Dendritic cell treated with granulocyte-macrophage colony-stimulating factor and Interleukin-4, amounts not matched to agents 40 ng/mL and 50 ng/mL, for 4 days (primary cell): ENCODE measurements at regions of chr19 and their contacts with region 1.

Region 1: GRCh38 chr19:1173845-1174809 is at the start of gene SBNO2:
- H3K4me3 Mint-ChIP-seq: peak within 1 kb of the TSS; percentile 98
- H3K27ac Mint-ChIP-seq: peak within 1 kb of the TSS; percentile 99
- H3K4me1 Mint-ChIP-seq: peaks cover 72% of the 10 kb centered on the region
- H3K27me3 Mint-ChIP-seq: no peaks in the 10 kb centered on the region

Region 2: GRCh38 chr19:1131738-1132551 is 42.2 kb before region 1 on chr19:
- intact Hi-C with region 1: loop called (anchors 5 kb)
- H3K4me3 Mint-ChIP-seq: peak overlapping the region; percentile 88
- H3K27ac Mint-ChIP-seq: peak overlapping the region; percentile 89
- H3K4me1 Mint-ChIP-seq: peaks cover 78% of the 10 kb centered on the region
- H3K27me3 Mint-ChIP-seq: no peaks in the 10 kb centered on the region

Region 3: DNA sequence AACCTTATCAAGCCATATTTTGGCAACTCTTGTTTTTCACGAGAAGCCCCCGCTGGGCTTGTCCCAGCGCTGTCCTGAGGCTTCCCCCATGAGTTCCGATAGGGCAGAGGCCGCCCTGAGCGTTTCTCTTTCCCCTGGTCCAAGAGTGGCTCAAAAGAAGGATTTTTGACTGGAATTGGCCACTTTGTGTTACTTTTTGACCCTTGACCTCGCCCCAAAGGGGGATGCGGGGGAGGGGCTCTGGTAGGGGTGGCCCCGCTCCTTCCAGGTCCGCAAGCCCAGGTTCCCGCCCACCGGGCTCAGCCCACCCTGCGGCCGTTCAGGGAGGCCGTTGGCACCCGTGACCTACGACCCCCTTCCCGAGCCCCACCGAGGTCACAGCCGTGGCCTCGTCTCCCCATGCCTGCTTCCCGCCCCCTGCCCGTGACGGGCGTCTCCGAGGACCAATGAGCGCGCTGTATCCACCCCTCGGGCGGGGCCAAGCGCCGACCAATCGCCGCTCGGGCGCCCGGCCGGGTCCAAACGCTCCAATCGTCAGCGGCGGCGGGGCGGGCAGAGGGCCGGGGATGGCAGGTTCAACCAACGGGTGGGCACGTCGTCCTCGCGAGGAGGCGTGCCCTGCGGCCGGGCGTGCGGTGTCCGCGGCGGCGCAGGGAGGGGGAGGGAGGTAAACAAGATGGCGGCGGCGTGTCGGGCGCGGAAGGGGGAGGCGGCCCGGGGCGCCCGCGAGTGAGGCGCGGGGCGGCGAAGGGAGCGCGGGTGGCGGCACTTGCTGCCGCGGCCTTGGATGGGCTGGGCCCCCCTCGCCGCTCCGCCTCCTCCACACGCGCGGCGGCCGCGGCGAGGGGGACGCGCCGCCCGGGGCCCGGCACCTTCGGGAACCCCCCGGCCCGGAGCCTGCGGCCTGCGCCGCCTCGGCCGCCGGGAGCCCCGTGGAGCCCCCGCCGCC is 31.3 kb after region 1 on chr19 and contains the start of gene STK11:
- intact Hi-C with region 1: no loop called
- H3K4me3 Mint-ChIP-seq: peak within 1 kb of the TSS; percentile 93
- H3K27ac Mint-ChIP-seq: peak within 1 kb of the TSS; percentile 88
- H3K4me1 Mint-ChIP-seq: peaks cover 41% of the 10 kb centered on the region
- H3K27me3 Mint-ChIP-seq: no peaks in the 10 kb centered on the region

Region 4: DNA sequence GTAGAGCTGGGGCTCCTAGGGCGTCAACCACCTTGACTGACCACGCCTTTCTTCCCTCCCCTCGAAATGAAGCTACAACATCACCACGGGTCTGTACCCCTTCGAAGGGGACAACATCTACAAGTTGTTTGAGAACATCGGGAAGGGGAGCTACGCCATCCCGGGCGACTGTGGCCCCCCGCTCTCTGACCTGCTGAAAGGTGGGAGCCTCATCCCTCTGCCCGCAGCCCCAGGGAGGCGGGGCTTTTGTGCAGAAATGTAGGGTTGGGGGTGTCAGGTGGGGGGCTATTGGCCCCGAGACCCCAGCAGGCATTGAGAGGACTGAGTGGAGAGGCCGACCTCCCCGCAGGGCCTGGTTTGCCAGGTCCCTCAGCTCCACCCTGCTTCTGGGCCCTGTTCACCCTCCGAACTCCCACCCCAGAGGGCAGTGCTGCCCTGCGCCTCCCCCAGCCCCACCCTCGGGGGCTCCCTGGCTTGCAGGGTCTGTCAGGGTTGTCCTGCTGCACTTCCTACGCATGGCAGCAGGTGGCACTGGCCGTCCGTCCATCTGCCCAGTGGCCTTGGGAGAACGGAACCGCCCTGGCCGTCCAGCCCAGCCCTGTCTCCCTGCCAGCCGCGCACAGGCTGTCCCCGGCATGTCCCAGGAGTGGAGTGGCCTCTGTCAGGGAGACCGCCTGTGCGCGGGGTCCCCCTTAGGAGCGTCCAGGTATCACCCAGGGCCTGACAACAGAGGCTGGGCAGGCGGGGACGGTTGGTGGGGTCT is 47.2 kb after region 1 on chr19:
- intact Hi-C with region 1: no loop called
- H3K4me3 Mint-ChIP-seq: no peak overlapping the region
- H3K27ac Mint-ChIP-seq: no peak overlapping the region
- H3K4me1 Mint-ChIP-seq: peaks cover 32% of the 10 kb centered on the region
- H3K27me3 Mint-ChIP-seq: no peaks in the 10 kb centered on the region

Region 5: DNA sequence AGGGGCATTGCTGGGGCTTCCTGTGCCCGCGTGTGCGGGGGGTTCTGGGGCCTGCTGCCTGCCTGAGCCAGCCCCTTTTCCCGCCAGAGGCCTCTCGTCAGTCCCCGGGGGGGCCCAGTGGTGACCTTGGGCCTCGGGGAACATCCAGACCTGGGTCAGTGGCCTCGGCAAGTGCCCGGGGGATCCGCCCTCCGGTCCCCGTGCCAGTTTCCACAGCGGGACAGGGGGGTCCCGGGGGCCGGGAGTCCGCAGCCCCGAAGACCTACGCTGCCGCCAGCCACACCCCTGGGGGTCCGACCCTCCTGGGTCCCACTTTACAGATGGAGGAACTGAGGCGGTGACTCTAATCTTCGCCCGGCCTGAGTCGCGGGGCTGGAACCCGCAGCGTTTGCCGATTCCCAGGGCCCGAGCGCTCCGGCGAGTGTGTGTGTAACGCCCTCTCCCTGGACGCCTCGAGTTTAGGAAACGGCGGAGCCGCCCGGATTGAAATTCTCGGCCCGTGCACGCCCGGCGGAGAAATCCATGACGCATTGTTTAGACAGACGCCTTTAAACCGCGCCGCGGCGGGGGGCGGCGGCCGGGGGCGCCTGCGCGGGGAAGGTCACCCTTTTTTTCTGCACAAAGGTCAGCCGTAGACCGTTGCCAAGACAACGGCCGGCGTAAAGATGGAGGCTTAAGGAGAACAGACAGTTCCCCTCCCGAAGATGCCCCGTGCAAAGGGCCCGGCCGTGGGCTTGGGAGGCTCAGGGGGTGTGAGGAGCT is 150.9 kb after region 1 on chr19:
- intact Hi-C with region 1: no loop called
- H3K4me3 Mint-ChIP-seq: peak overlapping the region; percentile 11
- H3K27ac Mint-ChIP-seq: no peak overlapping the region
- H3K4me1 Mint-ChIP-seq: peaks cover 6% of the 10 kb centered on the region
- H3K27me3 Mint-ChIP-seq: peaks cover 50% of the 10 kb centered on the region

Region 6: DNA sequence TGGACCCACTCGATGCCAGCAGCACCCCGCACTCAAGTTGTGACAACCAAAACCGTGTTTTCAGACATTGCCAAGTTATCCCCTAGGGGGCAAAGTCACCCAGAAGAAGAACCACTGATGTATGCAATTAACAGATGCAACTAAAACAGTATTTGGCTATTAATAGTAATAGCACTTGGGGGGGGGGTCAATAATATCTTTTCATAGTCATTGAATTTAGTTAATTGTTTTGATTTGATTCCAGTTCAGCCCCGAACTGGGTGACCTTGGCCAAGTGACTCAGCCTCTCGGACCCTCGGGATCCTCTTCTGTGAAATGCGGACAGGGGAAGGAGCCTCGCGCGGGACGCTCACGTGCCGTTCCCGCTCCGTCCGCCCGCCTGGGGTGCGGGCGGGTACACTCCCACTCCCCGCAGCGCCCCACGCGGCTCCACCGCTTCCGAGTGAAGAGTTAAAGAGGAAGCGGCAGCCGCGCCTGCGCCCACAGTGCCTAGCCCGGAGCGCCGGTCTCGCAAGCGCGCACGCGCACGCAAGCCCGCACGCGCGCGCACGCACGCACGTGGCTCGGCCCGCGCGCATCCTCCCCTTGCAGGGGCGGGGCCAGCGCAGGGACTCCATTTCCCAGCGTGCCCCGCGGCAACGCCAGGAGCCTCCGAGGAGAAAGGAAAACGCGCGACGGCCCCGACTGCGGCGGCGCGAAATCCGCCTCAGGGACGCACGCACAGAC is 232.8 kb after region 1 on chr19:
- intact Hi-C with region 1: no loop called
- H3K4me3 Mint-ChIP-seq: peak overlapping the region; percentile 69
- H3K27ac Mint-ChIP-seq: peak overlapping the region; percentile 73
- H3K4me1 Mint-ChIP-seq: peaks cover 55% of the 10 kb centered on the region
- H3K27me3 Mint-ChIP-seq: peaks cover 22% of the 10 kb centered on the region